HCT116 (cell line): ENCODE measurements at regions of chr17 and their contacts with region 1.

Region 1: DNA sequence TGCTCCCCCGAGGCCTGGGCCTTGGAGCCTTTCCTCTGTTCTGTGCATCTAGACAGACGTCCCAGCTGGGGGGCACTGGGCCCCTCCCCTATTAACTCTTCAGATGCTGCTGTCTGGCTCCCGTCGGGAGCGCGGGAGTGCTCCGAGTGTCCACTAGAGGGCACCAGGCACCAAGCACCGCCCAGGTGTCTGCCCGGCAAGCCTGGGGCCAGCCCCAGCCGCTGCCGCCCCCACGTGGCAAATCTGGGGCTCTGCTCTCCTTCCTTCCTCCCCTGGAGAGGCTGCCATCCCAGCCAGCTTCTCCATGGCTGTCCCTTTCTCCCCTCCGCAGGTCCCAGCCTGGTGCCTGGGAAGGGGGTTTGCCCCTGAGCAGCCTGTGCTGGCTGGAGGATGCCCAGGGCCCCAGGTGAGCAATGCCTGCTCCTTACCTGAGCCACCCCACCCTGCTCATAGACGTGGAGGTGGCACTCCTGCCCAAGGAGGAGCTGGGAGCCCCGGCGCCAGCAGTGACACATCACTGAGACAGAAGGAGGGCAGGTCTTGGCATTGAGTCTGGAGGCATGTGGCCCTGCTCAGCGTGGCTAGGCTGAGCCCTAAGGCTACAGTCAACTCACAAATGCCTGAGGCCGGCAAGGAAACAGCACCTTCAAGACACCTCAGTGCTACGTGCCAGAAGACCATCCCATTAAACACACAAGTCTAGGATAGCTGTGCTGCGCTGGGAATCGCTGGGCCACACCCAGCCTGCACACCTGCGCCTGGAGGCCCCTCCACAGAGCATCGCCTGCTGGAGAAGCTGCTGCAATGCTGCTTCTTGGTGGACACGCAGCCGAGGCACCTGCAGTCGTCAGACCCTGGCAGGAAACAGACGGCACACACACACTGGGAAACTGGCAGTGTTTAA is 19.7 kb downstream of the TMEM235 start:
- DNase-seq: peak; percentile 71
- ATAC-seq: peak; percentile 93
- H3K4me3 ChIP-seq: peak overlapping the region; percentile 22 to 42
- H3K27ac ChIP-seq: peak overlapping the region; percentile 24; the same call in 1 of the 2 replicates
- H3K4me1 ChIP-seq: peaks cover 5 to 14% of the 10 kb centered on the region in 2 experiments
- H3K27me3 ChIP-seq: no peaks in the 10 kb centered on the region
- CTCF ChIP-seq: peak; percentile 100
- POLR2A ChIP-seq: no peak
- RAD21 ChIP-seq: peak; percentile 100

Region 2: DNA sequence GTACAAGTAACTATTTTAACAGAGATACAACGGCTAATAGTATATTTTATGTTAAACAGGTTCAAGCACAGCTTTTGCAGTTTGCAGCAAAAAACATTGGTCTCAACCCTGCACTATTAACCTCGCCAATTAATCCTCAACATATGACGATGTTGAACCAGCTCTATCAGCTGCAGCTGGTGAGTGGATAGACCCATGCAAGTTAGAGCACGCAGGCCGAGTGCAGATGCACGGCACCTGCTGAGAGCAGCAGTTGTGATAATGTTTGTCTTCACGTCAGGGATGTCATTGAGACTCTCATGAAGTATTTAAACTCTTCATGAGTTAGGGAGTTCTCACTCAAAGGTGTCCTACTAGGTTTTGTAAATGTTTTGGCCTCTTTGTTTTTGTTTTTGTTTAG is 168.2 kb before region 1 on chr17:
- CTCF ChIA-PET with region 1: interaction called, 49 read pairs
- POLR2A ChIA-PET with region 1: interaction called, 3 read pairs
- RAD21 ChIA-PET with region 1: interaction called, 3 to 6 read pairs
- intact Hi-C with region 1: loop called (anchors 1 kb)
- DNase-seq: no peak
- ATAC-seq: no peak
- H3K4me3 ChIP-seq: no peak overlapping the region
- H3K27ac ChIP-seq: no peak overlapping the region
- H3K4me1 ChIP-seq: no peaks in the 10 kb centered on the region
- H3K27me3 ChIP-seq: no peaks in the 10 kb centered on the region
- CTCF ChIP-seq: no peak
- POLR2A ChIP-seq: no peak
- RAD21 ChIP-seq: no peak

Region 3: DNA sequence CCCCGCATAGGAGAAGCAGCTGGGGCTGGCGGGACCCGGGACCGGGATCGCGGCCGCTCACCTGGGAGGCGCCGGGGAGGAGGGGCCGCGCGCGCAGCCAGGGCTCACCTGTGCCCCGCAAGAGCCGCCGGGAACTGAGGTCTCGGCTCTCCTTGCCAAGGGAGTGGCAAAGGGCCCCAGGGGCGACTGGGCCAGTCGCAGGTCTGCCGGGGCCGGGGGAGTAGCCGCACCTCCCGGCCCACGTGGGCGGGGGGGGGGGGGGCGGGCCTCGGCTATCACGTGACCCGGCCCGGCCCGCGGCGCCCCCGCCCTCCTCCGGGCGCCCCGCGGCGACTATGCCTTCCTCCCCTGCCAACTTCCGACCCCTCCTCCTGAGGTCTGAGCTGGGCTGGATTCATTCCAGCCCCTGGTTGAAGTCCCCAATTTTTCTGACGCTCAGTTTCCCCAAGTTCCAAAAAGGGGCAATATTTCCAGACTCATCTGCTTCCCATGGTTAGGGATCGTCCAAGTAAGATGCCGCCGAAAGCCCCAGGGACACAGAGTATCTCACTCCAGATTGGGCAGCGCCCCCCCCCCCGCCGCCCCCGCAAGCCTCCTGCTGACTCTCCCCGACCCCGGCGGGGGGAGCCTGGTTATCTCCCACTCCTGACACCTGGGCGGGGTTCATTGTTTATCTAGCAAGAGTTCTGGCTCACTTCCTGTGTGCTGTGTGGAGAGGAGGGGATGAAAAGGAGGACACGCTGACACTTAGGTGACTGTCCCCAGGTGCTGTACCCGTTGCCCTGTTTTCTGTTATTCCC is 122.4 kb before region 1 on chr17 and contains the start of gene TMC6:
- CTCF ChIA-PET with region 1: interaction called, 4 read pairs
- POLR2A ChIA-PET with region 1: no interaction called
- RAD21 ChIA-PET with region 1: interaction called in 1 of 2 experiments, 4 read pairs
- intact Hi-C with region 1: loop called (anchors 5 kb)
- DNase-seq: peak; percentile 64
- ATAC-seq: peak; percentile 81
- H3K4me3 ChIP-seq: peak within 1 kb of the TSS; percentile 89 to 92
- H3K27ac ChIP-seq: peak within 1 kb of the TSS; percentile 95
- H3K4me1 ChIP-seq: peaks cover 39 to 62% of the 10 kb centered on the region in 2 experiments
- H3K27me3 ChIP-seq: no peaks in the 10 kb centered on the region
- CTCF ChIP-seq: no peak
- POLR2A ChIP-seq: peak; percentile 19
- RAD21 ChIP-seq: no peak
- total RNA-seq, gene TMC6: 142 TPM

Region 4: GRCh38 chr17:78268951-78269905 is 18.1 kb after region 1 on chr17:
- CTCF ChIA-PET with region 1: interaction called, 10 read pairs
- POLR2A ChIA-PET with region 1: no interaction called
- RAD21 ChIA-PET with region 1: no interaction called
- intact Hi-C with region 1: no loop called
- DNase-seq: no peak
- ATAC-seq: no peak
- H3K4me3 ChIP-seq: no peak overlapping the region
- H3K27ac ChIP-seq: no peak overlapping the region
- H3K4me1 ChIP-seq: peaks cover 0 to 8% of the 10 kb centered on the region in 2 experiments; a peak in 1 of 4 replicates
- H3K27me3 ChIP-seq: no peaks in the 10 kb centered on the region
- CTCF ChIP-seq: no peak
- POLR2A ChIP-seq: no peak
- RAD21 ChIP-seq: no peak

Region 5: DNA sequence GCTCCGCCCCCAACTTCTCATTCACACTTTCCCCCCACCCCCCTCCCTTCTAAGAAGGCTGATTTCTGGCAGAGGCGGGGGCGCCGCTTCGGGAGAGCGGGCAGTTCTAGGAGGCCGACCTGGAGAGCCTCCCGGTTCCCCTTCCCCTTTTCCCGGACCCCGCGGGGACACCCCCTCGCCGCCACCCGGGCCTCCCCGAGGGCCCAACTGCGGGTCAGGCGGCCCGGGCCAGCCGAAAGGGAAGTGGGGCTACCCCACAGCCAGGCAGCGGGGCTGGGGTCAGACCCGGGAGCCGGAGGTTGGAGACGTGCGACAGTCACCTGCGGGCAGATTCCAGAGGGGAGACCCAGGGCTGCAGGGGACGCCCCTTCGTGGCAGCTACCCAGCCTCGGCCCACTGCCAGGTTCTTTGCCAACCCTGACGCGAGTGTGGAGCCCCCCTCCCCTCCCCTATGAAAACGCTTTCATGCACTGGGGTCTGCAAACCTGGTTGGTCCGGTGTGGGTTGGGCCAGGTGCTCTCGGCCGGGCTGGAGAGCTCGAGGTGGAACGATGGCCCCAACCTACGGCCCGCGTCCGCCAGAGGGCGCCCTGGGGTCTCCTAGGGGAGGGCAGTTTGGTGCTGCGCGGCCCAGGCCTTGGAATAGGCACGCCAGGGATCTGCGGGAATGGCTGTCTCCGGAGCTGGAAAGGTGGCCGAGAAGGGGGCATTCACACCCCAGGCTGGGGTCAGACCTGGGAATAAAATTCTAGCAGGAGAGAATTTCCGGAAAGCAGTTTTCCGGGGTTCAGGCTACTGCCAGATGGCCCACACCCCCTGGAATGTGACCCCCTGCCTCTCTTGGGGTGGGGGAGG is 109.5 kb after region 1 on chr17:
- CTCF ChIA-PET with region 1: interaction called, 18 read pairs
- POLR2A ChIA-PET with region 1: no interaction called
- RAD21 ChIA-PET with region 1: interaction called in 1 of 2 experiments, 7 read pairs
- intact Hi-C with region 1: loop called (anchors 2 kb)
- DNase-seq: peak; percentile 85
- ATAC-seq: peak; percentile 84
- H3K4me3 ChIP-seq: peak overlapping the region; percentile 86 to 96
- H3K27ac ChIP-seq: peak overlapping the region; percentile 99
- H3K4me1 ChIP-seq: peaks cover 8 to 54% of the 10 kb centered on the region in 2 experiments; a peak in 3 of 4 replicates
- H3K27me3 ChIP-seq: no peaks in the 10 kb centered on the region
- CTCF ChIP-seq: peak; percentile 93 to 99 (median 98); a peak in 5 of 6 replicates
- POLR2A ChIP-seq: no peak
- RAD21 ChIP-seq: peak; percentile 92